ENCODE measurements at regions of chr6 and their contacts with region 1.

Region 1: DNA sequence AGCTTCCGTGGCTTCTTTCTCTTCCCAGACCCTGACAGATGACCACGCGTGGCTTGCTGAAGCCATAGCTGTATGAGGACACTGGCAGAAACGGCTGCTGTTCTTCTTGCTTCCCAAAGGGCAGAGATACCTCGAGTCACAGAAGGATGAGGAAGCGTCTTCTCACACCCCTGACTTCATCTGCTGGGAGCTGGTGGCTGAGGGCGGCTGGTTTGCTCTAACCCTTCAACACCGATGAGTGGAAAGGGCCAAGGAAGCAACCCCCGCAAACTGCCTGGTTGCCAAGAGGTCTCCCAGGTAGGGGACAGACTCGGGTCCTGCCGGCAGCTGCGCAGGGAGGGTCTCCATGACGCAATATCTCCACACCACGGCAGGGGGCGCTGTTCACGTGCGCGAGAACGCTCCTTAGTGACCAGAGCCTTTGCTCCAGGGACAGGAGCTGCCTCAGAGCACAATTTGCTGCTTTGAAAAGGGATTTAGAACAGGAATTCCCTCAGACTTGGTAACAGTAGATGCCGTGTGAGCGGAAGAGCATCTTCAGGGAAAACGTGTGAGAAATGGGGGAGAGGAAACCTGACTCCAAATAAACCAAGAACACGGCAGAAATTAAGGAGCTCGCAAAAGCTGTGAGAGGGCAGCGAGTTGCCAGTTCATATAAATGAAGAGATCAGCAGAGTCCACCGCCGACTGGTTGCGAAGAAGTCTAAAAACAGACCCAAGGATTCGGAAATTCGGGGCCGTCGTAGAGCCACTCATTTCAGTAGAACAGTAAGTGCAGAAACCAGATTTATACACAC is 80.2 kb downstream of the ERMARD start:
- DNase-seq: no peak
- H3K4me3 ChIP-seq: no peak overlapping the region
- H3K27me3 ChIP-seq: no peaks in the 10 kb centered on the region
- CTCF ChIP-seq: peak; percentile 90

Region 2: DNA sequence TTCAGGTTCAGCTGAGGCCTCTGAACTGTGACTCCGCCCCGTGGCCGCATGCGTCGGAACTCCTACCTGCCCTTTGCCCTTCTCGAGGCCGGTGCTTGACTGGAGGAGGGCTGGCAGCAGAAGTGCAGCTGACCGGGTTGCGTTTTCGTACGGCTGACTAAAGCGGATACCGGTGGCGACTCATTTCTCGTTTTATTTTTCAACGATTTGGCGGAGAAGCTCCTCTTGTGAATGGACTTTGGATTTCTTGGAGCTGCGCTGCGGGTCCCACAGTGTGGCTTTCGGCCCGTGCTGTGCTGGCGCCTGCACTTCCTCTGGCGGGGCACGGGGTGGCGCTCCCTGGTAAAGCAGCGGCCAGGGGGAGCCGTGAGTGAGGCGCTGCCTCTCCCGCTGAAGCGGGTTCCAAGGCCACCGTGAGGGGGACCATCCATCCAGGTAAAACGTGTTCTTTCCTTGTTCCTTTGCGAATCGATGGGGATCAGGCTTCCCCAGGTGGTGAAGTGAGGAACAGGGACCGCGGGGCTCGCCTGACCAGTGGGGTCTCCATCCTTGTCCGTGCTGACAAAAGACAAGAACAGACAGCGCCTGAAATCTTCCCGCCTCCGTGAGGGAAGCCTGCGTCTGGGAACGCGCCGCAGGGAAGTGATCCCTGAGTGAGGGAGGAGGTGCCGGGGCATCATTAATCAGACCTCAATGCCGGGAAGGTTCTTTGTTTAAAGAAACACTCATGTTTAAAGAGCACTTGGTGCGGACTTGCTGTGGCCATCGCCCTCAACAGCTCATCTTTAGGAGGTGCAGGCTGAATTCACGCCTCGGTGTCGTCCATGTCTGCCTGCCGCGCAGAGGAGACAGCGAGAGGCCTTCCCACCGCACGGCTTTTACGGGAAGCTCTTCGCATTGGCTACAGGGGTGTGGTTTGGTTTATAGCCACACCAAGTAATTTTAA is 41.4 kb before region 1 on chr6:
- CTCF ChIA-PET with region 1: interaction called, 15 read pairs
- POLR2A ChIA-PET with region 1: no interaction called
- DNase-seq: peak; percentile 21
- H3K4me3 ChIP-seq: peak overlapping the region; percentile 45
- H3K27me3 ChIP-seq: peaks cover 1% of the 10 kb centered on the region; the same call in 1 of the 2 replicates
- CTCF ChIP-seq: peak; percentile 99

Region 3: GRCh38 chr6:169847901-169848311 is 16.3 kb after region 1 on chr6:
- CTCF ChIA-PET with region 1: interaction called, 25 read pairs
- POLR2A ChIA-PET with region 1: no interaction called
- DNase-seq: no peak
- H3K4me3 ChIP-seq: no peak overlapping the region
- H3K27me3 ChIP-seq: no peaks in the 10 kb centered on the region
- CTCF ChIP-seq: no peak

Region 4: DNA sequence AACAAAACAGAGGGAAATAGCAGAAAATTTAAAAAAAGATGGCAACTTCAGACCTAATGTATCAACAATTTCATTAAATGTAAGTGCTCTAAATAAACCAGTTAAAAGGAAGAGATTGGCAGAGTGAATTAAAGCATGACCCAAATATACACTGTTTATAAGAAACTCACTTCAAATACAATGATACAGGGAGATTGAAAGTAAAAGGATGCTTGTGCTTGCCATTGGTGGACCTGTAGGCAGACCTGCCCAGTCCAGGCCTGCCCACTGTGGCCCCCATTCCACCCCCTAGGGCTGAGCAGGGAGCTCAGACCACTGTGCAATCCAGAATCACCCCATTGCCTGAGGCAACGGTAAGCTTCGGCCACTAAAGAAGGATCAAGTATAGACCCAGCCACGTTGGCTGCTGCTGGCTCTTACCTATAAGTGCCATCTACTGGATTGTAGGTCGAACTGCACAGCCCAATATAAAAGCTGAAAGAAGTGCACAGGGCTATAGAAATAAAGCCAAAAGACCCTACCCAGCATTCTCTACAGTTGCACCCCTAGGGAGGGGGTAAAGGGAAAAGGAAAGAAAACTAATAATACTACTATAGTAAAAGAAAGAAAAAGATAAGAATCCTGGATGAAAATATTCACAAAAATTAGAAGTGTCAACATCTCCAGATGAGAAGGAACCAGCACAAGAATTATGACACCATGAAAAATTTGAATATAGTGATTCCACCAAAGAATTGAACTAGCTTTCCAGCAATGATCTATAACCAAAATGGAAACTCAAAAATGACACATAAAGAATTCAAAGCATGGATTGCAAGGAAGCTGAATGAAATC is 685.4 kb after region 1 on chr6:
- CTCF ChIA-PET with region 1: interaction called, 63 read pairs
- POLR2A ChIA-PET with region 1: no interaction called
- DNase-seq: no peak
- H3K4me3 ChIP-seq: no peak overlapping the region
- H3K27me3 ChIP-seq: no peaks in the 10 kb centered on the region
- CTCF ChIP-seq: peak; percentile 86

Region 5: GRCh38 chr6:170529839-170530469 is 698.3 kb after region 1 on chr6:
- CTCF ChIA-PET with region 1: interaction called, 70 read pairs
- POLR2A ChIA-PET with region 1: no interaction called
- DNase-seq: peak; percentile 5
- H3K4me3 ChIP-seq: no peak overlapping the region
- H3K27me3 ChIP-seq: no peaks in the 10 kb centered on the region
- CTCF ChIP-seq: peak; percentile 97